GM13976 (cell line): ENCODE measurements at regions of chr1 and their contacts with region 1.

Region 1: DNA sequence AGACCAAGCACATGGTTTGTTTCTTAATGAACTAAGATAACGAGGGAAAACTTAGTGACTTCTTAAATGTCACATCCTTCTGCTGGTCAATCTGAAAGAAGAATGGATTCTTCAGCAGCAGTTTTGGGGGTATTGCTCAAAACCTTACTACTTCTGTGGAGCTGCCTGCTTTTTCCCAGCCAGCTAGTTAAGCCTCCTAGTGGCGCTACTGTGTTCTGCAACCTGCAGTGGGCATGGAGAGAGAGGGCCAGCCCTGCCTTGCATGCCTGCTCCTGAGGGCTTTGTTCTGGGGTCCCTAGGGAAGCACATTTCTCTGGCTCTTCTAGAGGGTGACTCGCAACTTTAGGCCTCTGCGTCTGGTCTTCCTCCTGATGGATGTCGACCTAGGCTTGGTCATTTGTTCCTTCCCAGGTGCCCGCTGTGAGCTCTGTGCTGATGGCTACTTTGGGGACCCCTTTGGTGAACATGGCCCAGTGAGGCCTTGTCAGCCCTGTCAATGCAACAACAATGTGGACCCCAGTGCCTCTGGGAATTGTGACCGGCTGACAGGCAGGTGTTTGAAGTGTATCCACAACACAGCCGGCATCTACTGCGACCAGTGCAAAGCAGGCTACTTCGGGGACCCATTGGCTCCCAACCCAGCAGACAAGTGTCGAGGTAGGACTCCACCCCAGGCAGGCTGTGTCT is 42.0 kb downstream of the LAMC2 start:
- DNase-seq: peak; percentile 71
- CTCF ChIP-seq: peak; percentile 67

Region 2: DNA sequence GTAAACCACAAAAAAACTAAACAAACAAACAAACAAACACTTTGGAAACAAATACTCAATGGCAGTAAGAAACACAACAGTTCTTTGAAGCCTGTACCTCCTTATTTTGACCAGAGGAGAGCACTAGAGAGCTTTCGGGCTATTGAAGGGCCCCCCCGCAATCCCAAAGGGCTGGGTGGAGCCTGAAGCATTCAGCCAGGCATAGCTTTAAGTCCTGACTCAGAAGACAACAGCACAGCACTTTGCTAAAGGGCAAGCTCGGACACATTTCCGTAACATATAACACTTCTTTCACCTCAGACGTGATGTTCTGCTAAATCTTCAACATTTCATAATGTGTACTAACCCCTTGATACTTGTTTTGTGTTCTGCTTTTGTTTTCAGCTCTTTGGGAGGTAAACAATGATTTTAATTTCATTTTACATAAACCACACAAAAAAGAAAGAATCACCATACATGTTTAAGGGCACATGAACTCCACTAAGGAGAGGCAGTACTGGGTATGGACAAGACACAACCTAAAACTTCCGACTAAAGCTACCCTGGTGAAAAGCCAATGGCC is 265.5 kb before region 1 on chr1:
- in situ Hi-C with region 1: loop called (anchors 25 kb)
- DNase-seq: peak; percentile 85
- CTCF ChIP-seq: peak; percentile 47